ENCODE measurements at regions of chr1 and their contacts with region 1.

Region 1: GRCh38 chr1:150072959-150073358 is 5.4 kb downstream of the VPS45 start:
- DNase-seq: no peak
- H3K4me3 ChIP-seq: no peak overlapping the region
- H3K27ac ChIP-seq: no peak overlapping the region
- H3K4me1 ChIP-seq: no peaks in the 10 kb centered on the region
- H3K27me3 ChIP-seq: no peaks in the 10 kb centered on the region
- CTCF ChIP-seq: peak; percentile 34 to 60 (median 44)
- POLR2A ChIP-seq: no peak

Region 2: DNA sequence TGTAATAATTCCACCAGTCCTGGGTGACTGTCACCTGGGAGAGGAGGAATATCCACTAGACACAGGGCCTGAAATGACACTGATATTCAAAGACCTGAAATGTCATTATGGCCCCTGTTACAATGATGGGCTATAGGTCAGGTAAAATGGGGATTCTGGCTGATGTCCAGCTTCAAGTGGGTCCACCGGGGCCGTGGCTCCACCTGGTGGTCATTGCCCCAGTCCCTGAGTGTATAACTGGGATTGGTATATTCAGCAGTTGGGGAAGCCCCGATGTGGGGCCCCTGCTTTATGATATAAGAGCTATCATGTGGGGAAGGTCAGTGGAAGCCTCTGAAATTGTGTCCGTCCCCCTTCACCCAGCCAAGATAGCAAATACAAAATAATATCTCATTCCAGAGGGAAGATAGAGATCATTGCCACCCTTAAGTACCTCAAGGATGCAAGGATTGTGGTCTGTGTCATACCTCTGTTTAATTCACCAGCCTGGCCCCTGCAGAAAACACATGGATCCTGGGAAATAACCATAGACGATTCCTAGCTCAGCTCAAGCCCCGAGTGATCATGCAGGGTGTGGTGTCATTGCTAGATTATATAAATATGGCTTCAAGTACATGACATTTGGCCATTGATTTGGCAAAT is 96.1 kb after region 1 on chr1:
- intact Hi-C with region 1: loop called (anchors 5 kb)
- DNase-seq: peak; percentile 76 to 79
- H3K4me3 ChIP-seq: no peak overlapping the region
- H3K27ac ChIP-seq: no peak overlapping the region
- H3K4me1 ChIP-seq: peaks cover 0 to 6% of the 10 kb centered on the region in 2 donors
- H3K27me3 ChIP-seq: no peaks in the 10 kb centered on the region
- CTCF ChIP-seq: peak; percentile 82 to 91 (median 84)
- POLR2A ChIP-seq: no peak

Measured in uterus (tissue), 4 donors.